GM12878 (cell line): ENCODE measurements at regions of chr3 and their contacts with region 1.

Region 1: GRCh38 chr3:45043728-45044299 is 17.7 kb downstream of the CLEC3B start:
- DNase-seq: no peak
- ATAC-seq: no peak
- H3K4me3 ChIP-seq: no peak overlapping the region
- H3K27ac ChIP-seq: no peak overlapping the region
- H3K4me1 ChIP-seq: peaks cover 12% of the 10 kb centered on the region
- H3K27me3 ChIP-seq: no peaks in the 10 kb centered on the region
- CTCF ChIP-seq: no peak
- EP300 ChIP-seq: no peak
- POLR2A ChIP-seq: no peak
- RAD21 ChIP-seq: no peak

Region 2: DNA sequence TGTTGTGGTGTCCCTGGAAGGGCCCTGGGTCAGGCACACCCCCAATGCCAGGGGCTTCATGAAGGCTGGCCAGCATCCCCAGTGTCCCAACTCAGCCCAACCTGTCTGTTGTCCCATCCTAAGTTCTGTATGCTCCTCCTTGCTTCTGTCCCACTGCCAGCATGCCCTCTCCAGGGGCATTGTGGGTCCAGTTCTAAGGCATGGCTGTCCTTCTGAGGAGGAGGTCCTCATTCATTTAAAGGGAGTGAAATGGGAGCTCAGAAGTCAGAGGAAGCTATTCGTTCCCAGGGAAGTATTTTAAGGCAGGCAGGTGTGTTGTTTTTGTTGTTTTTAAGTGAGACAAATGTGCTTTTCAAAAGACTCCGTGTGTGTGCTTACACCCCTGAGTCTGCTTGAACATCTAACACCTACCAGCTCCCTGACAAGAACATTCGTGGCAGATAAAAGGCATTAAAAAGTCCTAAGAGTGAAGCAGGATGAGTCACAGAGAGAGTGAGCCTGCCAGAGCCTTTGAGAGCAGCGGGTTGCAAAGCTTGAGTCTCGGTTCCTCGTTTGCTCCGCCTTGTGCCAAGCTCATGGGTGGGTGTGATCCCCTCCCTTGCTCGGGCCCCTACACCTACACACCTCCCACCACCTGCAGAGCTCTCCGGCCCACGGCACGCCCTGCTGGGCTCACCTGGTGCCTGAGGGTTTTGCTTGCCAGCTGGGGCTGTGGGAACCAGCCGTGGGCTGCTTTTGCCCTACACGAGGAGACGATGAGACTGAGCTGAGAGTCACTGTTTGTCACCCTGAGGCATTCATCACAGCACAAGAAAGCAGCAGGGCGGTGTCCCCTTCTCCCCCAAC is 985.6 kb before region 1 on chr3:
- CTCF ChIA-PET with region 1: no interaction called
- POLR2A ChIA-PET with region 1: no interaction called
- RAD21 ChIA-PET with region 1: no interaction called
- SMC1A ChIA-PET with region 1: no interaction called
- in situ Hi-C with region 1: no loop called
- intact Hi-C with region 1: no loop called
- DNase-seq: peak; percentile 87
- ATAC-seq: peak; percentile 97
- H3K4me3 ChIP-seq: no peak overlapping the region
- H3K27ac ChIP-seq: peak overlapping the region; percentile 86
- H3K4me1 ChIP-seq: peaks cover 50% of the 10 kb centered on the region
- H3K27me3 ChIP-seq: no peaks in the 10 kb centered on the region
- CTCF ChIP-seq: no peak
- EP300 ChIP-seq: peak; percentile 44 to 66; a peak in 2 of 4 replicates
- POLR2A ChIP-seq: peak; percentile 64
- RAD21 ChIP-seq: no peak

Region 3: DNA sequence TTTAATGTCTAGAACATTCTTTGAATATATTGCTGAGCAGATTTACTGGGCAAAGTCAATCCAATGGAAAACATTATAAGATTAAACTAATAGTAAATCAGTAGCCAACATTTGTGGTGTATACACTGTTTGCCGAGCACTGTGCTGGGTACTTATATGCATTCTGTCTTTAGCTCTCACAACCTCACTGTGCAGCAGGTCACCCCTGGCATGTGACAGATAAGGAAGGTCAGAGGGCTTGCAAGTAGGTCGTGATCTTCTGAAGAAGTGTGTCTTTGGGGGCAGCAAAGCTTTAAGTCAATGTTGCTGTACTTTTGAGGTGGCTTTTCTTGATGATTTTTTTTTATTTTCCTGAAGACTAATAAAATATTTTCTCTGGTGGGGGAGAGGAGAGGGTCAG is 643.0 kb before region 1 on chr3:
- CTCF ChIA-PET with region 1: no interaction called
- POLR2A ChIA-PET with region 1: no interaction called
- RAD21 ChIA-PET with region 1: no interaction called
- SMC1A ChIA-PET with region 1: no interaction called
- in situ Hi-C with region 1: no loop called
- intact Hi-C with region 1: no loop called
- DNase-seq: no peak
- ATAC-seq: no peak
- H3K4me3 ChIP-seq: no peak overlapping the region
- H3K27ac ChIP-seq: no peak overlapping the region
- H3K4me1 ChIP-seq: no peaks in the 10 kb centered on the region
- H3K27me3 ChIP-seq: no peaks in the 10 kb centered on the region
- CTCF ChIP-seq: no peak
- EP300 ChIP-seq: no peak
- POLR2A ChIP-seq: no peak
- RAD21 ChIP-seq: no peak

Region 4: DNA sequence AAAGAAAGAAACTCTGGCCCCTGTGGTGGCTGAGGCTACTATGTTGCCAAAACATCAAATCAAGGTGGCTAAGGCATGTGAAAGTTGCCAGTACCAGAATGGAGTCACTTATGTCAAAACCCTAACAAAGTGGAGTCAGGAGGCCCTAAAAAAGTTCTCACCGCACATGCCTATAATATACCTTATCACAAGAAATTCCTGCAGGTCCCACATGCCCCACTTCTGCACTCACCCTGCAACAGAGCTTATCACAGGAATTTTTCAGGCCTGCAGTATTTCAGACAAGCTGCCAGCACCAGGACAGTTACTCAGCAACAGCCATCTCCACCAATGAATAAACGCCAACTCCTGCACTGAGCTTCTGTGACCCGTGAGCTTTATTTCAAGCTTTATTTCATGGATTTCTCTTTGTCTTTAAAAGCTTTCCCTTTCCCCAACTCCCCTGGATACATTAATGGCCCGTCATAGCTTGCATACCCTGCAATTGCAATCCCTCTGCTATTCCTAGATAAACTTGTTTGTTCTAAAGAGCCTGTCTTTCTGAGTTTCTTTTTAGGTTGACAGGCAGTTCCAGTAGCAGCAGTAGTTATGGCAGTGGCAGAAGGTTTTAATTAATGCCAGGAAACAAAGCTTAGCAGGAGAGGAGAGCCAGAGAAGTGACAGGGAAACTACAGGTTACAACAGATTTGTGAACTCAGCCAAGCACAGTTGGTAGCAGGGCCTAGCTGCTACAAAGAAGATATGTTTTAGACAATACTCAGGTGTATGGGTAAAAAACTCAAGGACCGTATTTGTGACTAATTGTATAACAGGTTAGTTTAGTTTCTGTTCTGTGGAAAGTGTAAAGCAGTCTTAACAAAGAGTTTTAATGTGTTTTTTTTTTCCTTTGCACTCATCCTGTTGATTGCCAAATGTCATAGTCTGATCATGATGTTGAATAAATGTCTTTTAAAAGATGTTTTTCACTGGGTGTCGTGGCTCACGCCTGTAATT is 198.0 kb before region 1 on chr3:
- CTCF ChIA-PET with region 1: no interaction called
- POLR2A ChIA-PET with region 1: no interaction called
- RAD21 ChIA-PET with region 1: no interaction called
- SMC1A ChIA-PET with region 1: no interaction called
- in situ Hi-C with region 1: no loop called
- intact Hi-C with region 1: no loop called
- DNase-seq: no peak
- ATAC-seq: no peak
- H3K4me3 ChIP-seq: no peak overlapping the region
- H3K27ac ChIP-seq: no peak overlapping the region
- H3K4me1 ChIP-seq: no peaks in the 10 kb centered on the region
- H3K27me3 ChIP-seq: no peaks in the 10 kb centered on the region
- CTCF ChIP-seq: no peak
- EP300 ChIP-seq: no peak
- POLR2A ChIP-seq: no peak
- RAD21 ChIP-seq: no peak

Region 5: DNA sequence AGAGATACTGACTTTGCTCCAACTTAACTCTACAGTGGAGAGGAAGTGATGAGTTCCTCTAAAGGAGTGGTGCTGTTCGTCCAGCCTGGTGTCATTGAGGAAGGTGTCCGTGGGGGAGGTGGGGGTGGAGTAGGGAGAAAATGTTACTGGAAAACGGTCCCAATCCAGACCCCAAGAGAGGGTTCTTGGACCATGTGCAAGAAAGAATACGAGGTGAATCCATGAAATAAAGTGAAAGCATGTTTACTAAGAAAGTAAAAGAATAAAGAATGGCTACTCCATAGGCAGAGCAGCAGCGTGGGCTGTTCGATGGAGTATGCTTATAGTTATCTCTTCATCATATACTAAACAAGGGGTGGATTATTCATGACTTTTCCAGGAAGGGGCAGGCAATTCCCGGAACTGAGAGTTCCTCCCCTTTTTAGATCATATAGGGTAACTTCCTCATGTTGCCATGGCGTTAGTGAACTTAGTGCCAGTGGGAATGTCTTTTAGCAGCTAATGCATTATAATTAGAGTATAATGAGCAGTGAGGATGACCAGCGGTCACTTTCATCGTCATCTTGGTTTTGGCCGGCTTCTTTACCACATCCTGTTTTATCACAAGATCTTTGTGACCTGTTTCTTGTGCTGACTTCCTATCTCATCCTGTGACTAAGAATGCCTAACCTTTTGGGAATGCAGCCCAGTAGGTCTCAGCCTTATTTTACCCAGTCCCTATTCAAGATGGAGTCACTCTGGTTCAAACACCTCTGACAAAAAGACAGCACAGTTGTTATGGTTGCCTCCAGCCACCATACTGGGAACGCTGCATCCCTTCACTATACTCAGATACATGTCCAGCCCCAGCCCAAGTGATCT is 20.9 kb after region 1 on chr3:
- CTCF ChIA-PET with region 1: interaction called, 6 read pairs
- POLR2A ChIA-PET with region 1: no interaction called
- RAD21 ChIA-PET with region 1: interaction called, 5 read pairs
- SMC1A ChIA-PET with region 1: interaction called, 13 read pairs
- in situ Hi-C with region 1: no loop called
- intact Hi-C with region 1: no loop called
- DNase-seq: no peak
- ATAC-seq: peak; percentile 52
- H3K4me3 ChIP-seq: no peak overlapping the region
- H3K27ac ChIP-seq: no peak overlapping the region
- H3K4me1 ChIP-seq: no peaks in the 10 kb centered on the region
- H3K27me3 ChIP-seq: no peaks in the 10 kb centered on the region
- CTCF ChIP-seq: no peak
- EP300 ChIP-seq: no peak
- POLR2A ChIP-seq: no peak
- RAD21 ChIP-seq: no peak

Region 6: DNA sequence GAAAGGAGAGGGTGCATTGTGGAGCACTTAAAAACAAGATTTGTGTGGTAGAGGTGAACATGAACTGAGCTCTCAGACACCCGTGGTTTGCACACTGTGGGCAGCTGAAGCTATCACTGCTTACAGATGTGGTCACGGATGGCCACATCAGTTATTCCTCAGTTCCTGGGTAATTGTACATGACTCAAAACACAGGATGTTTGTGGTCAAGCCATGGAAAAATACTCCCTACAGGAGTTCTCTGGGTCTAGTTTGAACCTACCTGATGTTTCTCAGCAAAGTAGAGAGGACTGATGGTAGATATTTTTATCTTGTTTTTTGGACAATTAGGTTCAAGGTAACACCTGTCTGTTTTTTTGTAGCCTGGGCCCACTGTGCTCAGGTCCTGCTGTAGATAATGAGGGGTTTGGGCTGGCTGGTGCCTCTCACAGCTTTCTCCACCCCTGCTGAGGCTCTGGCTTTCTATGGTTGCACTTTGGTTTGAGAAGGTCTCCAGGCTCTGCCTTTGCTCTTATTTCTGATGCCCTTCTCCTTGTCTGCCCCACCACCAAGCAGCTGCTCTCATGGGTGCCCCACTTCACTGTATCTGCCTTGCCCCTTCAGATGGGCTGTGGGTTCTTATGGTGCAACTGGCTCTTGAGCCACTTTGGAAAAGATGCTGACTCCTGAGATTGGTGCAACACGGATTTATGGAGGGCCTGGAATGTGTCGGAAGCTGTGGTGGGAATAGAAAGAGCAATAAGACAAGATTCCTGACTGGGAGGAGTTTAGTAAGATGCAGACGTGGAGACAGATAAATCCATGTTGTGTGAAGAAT is 62.2 kb after region 1 on chr3:
- CTCF ChIA-PET with region 1: interaction called, 25 read pairs
- POLR2A ChIA-PET with region 1: no interaction called
- RAD21 ChIA-PET with region 1: interaction called, 10 read pairs
- SMC1A ChIA-PET with region 1: interaction called, 16 read pairs
- in situ Hi-C with region 1: no loop called
- intact Hi-C with region 1: no loop called
- DNase-seq: no peak
- ATAC-seq: peak; percentile 76
- H3K4me3 ChIP-seq: no peak overlapping the region
- H3K27ac ChIP-seq: no peak overlapping the region
- H3K4me1 ChIP-seq: peaks cover 3% of the 10 kb centered on the region; the same call in 1 of the 2 replicates
- H3K27me3 ChIP-seq: no peaks in the 10 kb centered on the region; a peak in 1 of 4 replicates
- CTCF ChIP-seq: no peak
- EP300 ChIP-seq: peak in 1 of 2 experiments; percentile 61; a peak in 1 of 4 replicates
- POLR2A ChIP-seq: no peak
- RAD21 ChIP-seq: no peak

Region 7: DNA sequence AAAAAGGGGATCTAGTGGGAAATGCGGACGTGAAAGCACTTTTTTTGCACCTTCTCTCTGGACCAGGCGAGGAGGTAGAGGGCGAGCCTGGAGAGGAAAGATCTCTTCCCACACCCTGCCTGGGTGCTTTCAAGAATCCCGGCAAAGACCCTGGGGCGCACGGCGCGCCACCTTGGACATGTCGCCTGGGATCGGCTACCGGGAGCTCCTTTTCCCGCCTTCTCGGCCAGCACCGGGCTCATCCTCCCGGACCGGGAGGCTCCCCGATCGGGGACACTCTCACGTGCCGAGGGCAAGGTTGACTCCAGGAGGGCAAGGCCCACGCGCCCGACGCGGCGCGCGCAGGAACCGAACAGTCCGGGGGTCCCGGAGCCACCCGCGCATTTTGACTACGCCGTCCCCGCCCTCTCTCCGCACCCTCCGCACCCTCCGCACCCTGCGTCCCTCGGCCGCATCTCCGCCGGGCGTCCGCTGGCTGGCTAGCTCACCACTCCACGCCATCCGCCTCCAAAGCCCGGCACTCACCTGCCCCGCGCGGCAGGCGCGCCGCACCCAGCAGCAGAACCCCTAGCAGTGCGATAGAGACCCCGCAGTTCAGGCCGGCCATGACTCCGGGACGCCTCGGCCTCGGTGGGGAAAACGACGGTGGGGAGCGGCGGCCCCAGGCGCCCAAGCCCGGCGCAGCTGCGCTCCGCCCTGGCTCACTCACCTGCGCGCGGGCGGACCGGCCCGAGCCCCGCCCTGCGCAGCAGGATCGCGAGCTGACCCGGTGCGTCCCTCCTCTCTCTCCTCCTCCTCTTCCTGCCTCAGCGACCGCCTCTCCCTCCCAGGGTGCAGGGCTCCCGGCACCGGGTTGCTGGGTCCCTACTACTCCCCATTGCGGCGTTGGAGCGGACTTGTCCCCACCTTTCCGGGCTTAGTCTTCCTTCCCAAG is 102.1 kb after region 1 on chr3 and contains the start of gene CDCP1:
- CTCF ChIA-PET with region 1: interaction called, 9 read pairs
- POLR2A ChIA-PET with region 1: interaction called, 4 read pairs
- RAD21 ChIA-PET with region 1: interaction called, 16 read pairs
- SMC1A ChIA-PET with region 1: interaction called, 3 read pairs
- in situ Hi-C with region 1: no loop called
- intact Hi-C with region 1: no loop called
- DNase-seq: no peak
- ATAC-seq: peak; percentile 74
- H3K4me3 ChIP-seq: no peak within 1 kb of the TSS
- H3K27ac ChIP-seq: no peak within 1 kb of the TSS
- H3K4me1 ChIP-seq: no peaks in the 10 kb centered on the region
- H3K27me3 ChIP-seq: peaks cover 2 to 10% of the 10 kb centered on the region in 2 experiments
- CTCF ChIP-seq: no peak
- EP300 ChIP-seq: no peak
- POLR2A ChIP-seq: no peak
- RAD21 ChIP-seq: no peak
- polyA plus RNA-seq, gene CDCP1: 0.35 to 0.69 TPM

Region 8: DNA sequence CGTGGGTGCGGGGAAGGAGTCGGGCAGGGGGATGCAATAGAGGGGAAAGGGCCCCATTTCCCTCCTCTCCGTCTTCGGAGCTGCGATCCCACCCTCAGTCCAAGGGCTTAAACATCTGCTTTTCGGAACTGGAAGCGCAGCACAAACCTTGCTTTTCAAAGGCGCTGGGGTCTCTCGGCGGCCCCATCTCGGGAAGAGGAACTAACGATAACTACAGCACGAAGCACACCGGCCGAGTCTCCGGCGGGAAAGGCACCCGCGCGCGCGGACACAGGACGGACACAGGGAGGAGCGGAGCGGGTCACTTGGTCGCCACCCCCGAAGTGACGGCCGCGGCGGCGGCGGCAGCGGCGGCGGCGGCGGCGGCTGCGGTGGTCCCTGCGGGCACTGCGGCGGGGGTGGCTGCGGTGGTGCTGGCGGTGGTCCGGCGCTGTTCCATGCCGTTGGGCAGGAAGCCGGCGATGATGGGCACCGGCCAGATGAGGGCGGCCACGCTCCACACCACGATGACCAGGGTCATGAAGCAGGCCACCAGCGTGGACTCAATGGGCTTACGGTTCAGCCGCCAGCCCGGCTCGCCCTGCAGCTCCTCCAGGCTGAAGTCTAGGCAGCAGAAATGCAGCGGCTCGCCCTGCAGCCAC is 181.1 kb after region 1 on chr3:
- CTCF ChIA-PET with region 1: interaction called, 16 read pairs
- POLR2A ChIA-PET with region 1: no interaction called
- RAD21 ChIA-PET with region 1: interaction called, 5 read pairs
- SMC1A ChIA-PET with region 1: interaction called, 6 read pairs
- in situ Hi-C with region 1: no loop called
- intact Hi-C with region 1: no loop called
- DNase-seq: no peak
- ATAC-seq: peak; percentile 59
- H3K4me3 ChIP-seq: no peak overlapping the region
- H3K27ac ChIP-seq: no peak overlapping the region
- H3K4me1 ChIP-seq: no peaks in the 10 kb centered on the region
- H3K27me3 ChIP-seq: peaks cover 3 to 13% of the 10 kb centered on the region in 2 experiments
- CTCF ChIP-seq: peak in 2 of 3 experiments; percentile 34 to 56; a peak in 3 of 6 replicates
- EP300 ChIP-seq: no peak
- POLR2A ChIP-seq: no peak
- RAD21 ChIP-seq: 0 out of 2 replicates have a peak, but pooled peaks have one; percentile 19

Region 9: DNA sequence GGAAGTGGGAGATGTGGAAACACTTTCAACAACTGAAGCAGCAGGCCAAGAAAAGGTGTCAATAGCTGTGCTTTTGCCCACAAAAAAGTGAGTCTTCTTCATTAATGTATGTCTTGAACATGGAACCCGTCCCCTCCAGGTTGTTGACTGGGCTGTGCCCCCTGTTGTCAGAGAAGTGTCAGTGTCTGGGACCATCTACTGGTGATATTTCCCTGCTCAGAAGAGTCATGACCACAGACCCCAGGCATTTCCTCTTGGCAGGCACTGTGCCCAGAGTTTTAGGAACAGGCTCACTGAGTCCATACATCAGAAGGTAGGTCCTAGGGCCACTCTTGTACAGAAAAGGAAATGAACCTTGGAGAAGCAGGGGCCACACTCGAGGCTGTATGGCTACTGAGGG is 289.7 kb after region 1 on chr3:
- CTCF ChIA-PET with region 1: interaction called, 11 read pairs
- POLR2A ChIA-PET with region 1: no interaction called
- RAD21 ChIA-PET with region 1: interaction called, 3 read pairs
- SMC1A ChIA-PET with region 1: interaction called, 7 read pairs
- in situ Hi-C with region 1: no loop called
- intact Hi-C with region 1: loop called (anchors 5 kb)
- DNase-seq: no peak
- ATAC-seq: no peak
- H3K4me3 ChIP-seq: no peak overlapping the region
- H3K27ac ChIP-seq: no peak overlapping the region
- H3K4me1 ChIP-seq: no peaks in the 10 kb centered on the region
- H3K27me3 ChIP-seq: peaks cover 0 to 2% of the 10 kb centered on the region in 2 experiments
- CTCF ChIP-seq: no peak
- EP300 ChIP-seq: no peak
- POLR2A ChIP-seq: no peak
- RAD21 ChIP-seq: no peak